ENCODE measurements at regions of chr17 and their contacts with region 1.

Region 1: DNA sequence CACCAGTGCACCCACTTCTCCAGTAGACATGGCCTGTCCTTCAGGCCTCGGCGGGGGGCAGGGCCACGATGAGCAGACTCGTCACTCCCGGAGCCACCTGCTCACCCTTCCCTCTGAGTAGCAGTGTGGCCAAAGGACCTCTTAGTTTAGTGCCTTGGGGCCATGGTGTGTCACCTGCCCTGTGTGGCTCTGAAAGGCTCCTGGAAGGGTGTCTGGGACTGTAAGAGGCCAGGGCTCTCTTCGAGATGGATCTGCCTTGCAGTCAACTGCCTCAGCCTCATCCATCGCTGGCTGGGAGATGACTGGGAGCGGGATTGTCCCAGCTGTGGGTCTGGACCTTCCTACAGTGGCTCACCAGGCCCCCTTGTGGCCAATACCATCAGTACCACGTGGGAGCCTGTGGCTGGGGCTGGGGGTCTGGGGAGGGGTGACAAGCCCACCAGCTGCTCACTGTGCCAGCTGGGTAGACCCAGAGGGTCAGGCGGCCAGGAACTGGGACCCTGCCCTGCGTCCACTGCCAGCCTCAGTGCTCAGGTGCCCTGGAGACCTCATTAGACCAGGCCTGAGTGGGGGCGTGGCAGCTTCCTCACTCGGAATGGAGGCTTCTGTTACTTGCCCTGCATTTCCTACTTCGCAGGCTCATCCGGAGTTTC is 133.4 kb downstream of the OR1D5 start:
- DNase-seq: peak in 17 of 42 donors; percentile 10 to 65 (median 23)

Region 2: DNA sequence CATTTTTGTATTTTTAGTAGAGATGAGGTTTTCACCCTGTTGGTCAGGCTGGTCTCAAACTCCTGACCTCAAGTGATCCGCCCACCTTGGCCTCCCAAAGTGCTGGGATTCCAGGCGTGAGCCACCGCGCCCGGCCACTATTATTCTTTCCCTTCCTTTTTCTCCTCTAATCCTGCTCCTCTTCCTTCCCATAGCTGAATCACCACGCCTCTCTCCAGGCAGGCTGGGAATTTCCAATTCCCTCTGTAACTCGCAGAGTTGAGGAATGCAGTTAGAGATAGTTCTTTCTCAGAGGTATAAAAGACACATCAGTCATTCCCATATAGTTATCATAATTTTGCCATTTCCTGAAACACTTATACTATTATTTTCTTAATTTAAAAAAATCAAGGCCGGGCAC is 429.6 kb before region 1 on chr17:
- intact Hi-C with region 1: no loop called
- DNase-seq: peak in 1 of 42 donors; percentile 34

Region 3: DNA sequence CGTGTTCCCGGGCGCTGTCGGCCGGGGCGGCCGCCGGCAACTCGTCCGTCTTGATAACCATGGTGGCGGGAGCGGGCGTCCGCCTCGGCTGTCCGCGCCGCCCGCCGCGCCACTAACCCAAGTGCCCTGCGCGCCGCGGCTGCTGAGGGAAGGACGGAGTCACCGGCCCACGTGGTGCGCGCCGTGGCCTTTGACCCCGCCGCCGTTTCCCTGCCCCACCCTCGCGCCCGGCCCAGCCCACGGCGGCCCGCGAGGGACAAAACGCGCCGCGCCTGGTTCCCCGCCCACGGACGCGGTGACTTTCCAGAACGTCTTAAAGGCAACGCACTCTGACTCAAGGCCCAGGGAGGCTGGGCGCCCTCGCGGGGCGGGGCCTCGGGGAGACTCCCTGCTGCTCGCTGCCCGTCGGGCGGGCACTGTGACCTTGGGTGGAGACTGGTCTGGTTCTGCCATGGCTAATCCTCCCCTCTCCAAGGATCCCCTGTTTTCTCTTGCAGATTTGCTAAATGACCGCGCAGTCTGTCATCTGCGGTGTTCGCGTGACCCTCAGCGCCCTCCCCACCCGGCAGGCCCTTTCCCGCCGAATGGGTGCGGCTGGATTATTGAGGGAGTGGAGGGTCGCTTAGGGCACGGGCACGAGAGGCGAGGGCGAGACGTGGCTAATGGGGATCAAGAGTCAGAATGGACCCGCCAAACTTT is 218.3 kb before region 1 on chr17 and contains the start of gene CLUH:
- intact Hi-C with region 1: no loop called
- DNase-seq: peak; percentile 88 to 98 (median 95)

Region 4: GRCh38 chr17:2853111-2853721 is 76.8 kb before region 1 on chr17:
- intact Hi-C with region 1: loop called (anchors 10 kb)
- DNase-seq: peak in 3 of 42 donors; percentile 17 to 35 (median 23)

Region 5: DNA sequence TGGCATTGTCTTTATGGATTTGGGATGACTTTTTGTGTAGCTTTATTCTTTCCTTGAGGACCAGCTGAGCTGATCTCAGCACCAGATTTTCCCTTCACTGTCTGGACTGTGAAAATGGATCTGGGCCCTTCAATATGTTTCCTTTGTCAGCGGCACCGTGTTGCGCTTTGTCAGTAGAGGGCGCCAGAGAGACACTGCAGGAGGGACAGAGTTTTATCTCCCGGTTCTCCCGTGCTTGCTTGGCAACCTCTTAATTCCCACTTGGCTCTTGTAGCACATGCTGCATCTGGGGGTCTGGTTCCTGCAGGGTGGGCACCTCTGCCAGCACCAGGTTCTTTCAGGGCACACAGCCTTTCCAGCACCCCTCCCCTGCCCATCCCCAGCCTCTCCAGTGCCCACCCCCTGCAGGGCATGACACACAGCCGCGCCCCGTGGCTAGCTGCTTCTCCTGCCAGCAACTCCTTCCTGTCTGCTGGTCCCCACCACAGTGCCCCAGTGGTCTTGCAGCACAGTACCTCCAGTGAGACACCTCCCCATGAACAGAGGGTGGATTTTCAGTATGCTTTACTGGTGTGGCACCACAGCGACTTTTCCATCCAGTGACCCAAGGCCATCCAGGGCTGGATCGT is 113.8 kb after region 1 on chr17:
- intact Hi-C with region 1: no loop called
- DNase-seq: peak in 2 of 42 donors; percentile 7 to 17

Measured in head of caudate nucleus (tissue), 42 donors.